HepG2 (cell line): ENCODE measurements at regions of chr17 and their contacts with region 1.

Region 1: GRCh38 chr17:19648475-19649406 is at the start of gene ALDH3A2:
- DNase-seq: peak; percentile 95
- ATAC-seq: peak; percentile 94
- H3K4me3 ChIP-seq: peak within 1 kb of the TSS; percentile 86 to 89 (median 86)
- H3K27ac ChIP-seq: peak within 1 kb of the TSS; percentile 88
- H3K4me1 ChIP-seq: peaks cover 71% of the 10 kb centered on the region
- H3K27me3 ChIP-seq: no peaks in the 10 kb centered on the region; a peak in 1 of 5 replicates
- CTCF ChIP-seq: peak; percentile 82
- EP300 ChIP-seq: peak; percentile 59 to 88; a peak in 3 of 4 replicates
- POLR2A ChIP-seq: peak; percentile 48 to 94; a peak in 3 of 4 replicates
- RAD21 ChIP-seq: peak; percentile 94
- total RNA-seq, gene ALDH3A2: 180 and 245 TPM in 2 replicates

Region 2: DNA sequence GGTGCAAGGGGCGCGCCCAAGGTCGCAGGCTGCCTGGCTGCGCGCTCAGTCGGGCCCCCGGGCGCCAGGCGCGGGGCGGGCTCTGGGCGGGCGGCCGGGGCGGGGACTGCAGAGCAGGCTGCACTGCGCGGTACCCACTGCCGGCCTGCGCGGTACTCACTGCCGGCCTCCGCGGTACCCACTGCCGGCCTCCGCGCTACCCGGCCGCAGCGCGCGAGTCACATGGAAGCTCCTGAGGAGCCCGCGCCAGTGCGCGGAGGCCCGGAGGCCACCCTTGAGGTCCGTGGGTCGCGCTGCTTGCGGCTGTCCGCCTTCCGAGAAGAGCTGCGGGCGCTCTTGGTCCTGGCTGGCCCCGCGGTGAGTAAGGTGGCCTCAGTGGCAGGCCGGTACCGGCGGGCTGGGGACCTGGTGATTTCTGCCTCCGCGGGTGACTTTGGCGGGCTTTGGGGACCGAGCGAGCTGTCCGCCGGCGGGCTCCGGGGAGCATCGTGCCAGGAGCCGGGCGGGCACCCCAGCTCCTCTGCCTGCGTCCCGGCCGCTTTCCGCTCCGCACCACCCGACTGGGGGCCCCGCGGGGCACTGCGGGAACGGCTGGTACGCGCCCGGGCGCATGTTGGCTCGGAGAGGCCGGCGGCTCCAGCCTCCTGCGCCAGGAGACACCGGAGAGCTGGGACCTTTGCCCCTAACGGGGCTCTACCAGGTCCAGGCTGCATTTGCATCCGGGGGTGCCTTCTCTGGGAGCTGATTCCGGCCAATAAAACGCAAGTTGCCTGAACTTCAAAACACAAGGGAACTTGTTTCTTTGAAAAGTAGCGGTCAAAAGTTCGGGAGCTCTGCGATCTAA is 114.8 kb before region 1 on chr17 and contains the start of gene SLC47A1:
- CTCF ChIA-PET with region 1: no interaction called
- POLR2A ChIA-PET with region 1: interaction called, 35 read pairs
- in situ Hi-C with region 1: no loop called
- intact Hi-C with region 1: loop called (anchors 5 kb)
- DNase-seq: peak; percentile 58
- ATAC-seq: peak; percentile 94
- H3K4me3 ChIP-seq: peak within 1 kb of the TSS; percentile 90 to 94 (median 91)
- H3K27ac ChIP-seq: peak within 1 kb of the TSS; percentile 94
- H3K4me1 ChIP-seq: peaks cover 70% of the 10 kb centered on the region
- H3K27me3 ChIP-seq: no peaks in the 10 kb centered on the region; a peak in 1 of 5 replicates
- CTCF ChIP-seq: no peak
- EP300 ChIP-seq: no peak
- POLR2A ChIP-seq: peak; percentile 48 to 68; a peak in 3 of 4 replicates
- RAD21 ChIP-seq: peak; percentile 42
- total RNA-seq, gene SLC47A1: 38.0 and 67.5 TPM in 2 replicates

Region 3: GRCh38 chr17:19664136-19664820 is 15.5 kb after region 1 on chr17:
- CTCF ChIA-PET with region 1: no interaction called
- POLR2A ChIA-PET with region 1: interaction called, 194 read pairs
- in situ Hi-C with region 1: no loop called
- intact Hi-C with region 1: loop called (anchors 1 kb)
- DNase-seq: no peak
- ATAC-seq: no peak
- H3K4me3 ChIP-seq: no peak overlapping the region
- H3K27ac ChIP-seq: no peak overlapping the region
- H3K4me1 ChIP-seq: peaks cover 71% of the 10 kb centered on the region
- H3K27me3 ChIP-seq: no peaks in the 10 kb centered on the region
- CTCF ChIP-seq: no peak
- EP300 ChIP-seq: no peak
- POLR2A ChIP-seq: no peak
- RAD21 ChIP-seq: no peak

Region 4: GRCh38 chr17:19703106-19703827 is 54.5 kb after region 1 on chr17:
- CTCF ChIA-PET with region 1: no interaction called
- POLR2A ChIA-PET with region 1: interaction called, 12 read pairs
- in situ Hi-C with region 1: no loop called
- intact Hi-C with region 1: no loop called
- DNase-seq: no peak
- ATAC-seq: peak; percentile 10
- H3K4me3 ChIP-seq: peak overlapping the region in 1 of 3 experiments; percentile 65; a peak in 1 of 6 replicates
- H3K27ac ChIP-seq: no peak overlapping the region
- H3K4me1 ChIP-seq: peaks cover 60% of the 10 kb centered on the region
- H3K27me3 ChIP-seq: peaks cover 0 to 15% of the 10 kb centered on the region in 2 experiments; a peak in 4 of 5 replicates
- CTCF ChIP-seq: no peak
- EP300 ChIP-seq: no peak
- POLR2A ChIP-seq: no peak
- RAD21 ChIP-seq: no peak

Region 5: GRCh38 chr17:19733953-19734526 is 85.3 kb after region 1 on chr17:
- CTCF ChIA-PET with region 1: no interaction called
- POLR2A ChIA-PET with region 1: interaction called, 21 read pairs
- in situ Hi-C with region 1: no loop called
- intact Hi-C with region 1: loop called (anchors 10 kb)
- DNase-seq: peak; percentile 97
- ATAC-seq: peak; percentile 91
- H3K4me3 ChIP-seq: peak overlapping the region in 2 of 3 experiments; percentile 41 to 54; a peak in 3 of 6 replicates
- H3K27ac ChIP-seq: peak overlapping the region; percentile 95
- H3K4me1 ChIP-seq: peaks cover 92% of the 10 kb centered on the region
- H3K27me3 ChIP-seq: no peaks in the 10 kb centered on the region; a peak in 1 of 5 replicates
- CTCF ChIP-seq: no peak
- EP300 ChIP-seq: peak; percentile 39 to 91; a peak in 3 of 4 replicates
- POLR2A ChIP-seq: no peak
- RAD21 ChIP-seq: no peak